Prostate gland (tissue), 2 donors: ENCODE measurements at regions of chr1 and their contacts with region 1.

Region 1: DNA sequence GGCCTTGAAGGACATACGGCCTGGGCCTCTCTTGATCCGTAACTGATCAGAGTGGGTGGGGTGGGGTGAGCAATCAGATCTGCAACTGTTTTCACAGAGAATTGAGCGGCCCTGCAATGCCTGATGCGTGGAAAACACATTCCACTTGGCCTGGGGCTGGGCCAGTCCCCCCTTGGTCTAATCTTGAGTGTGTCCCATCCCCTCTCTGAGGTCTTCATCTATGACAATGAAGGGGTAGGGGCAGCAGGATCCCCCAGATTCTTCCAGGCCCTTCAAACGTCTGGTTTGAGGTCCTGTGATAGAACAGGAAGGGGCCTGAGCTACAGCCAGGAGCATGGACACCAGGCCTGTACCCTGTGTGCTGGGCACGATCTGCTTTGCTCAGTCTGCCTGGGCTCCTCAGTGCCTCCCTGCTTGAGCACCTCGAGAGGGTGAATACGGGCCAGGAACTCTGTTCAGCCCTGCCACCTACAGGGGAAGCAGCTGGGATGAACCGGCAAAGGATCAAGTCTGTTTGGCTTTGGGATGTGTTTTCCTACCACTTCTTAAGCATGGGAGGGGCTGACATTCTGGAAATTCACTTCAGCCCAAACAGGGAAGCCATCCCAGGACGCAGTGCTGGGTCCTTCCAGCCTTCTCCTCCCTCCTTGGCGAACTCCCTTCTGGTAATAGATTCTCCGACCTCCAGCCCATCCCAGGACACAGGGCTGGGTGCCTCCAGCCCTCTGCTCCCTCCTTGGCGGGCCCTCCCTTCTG is 56.0 kb upstream of the SELENON start:
- DNase-seq: peak; percentile 73
- H3K4me3 ChIP-seq: no peak overlapping the region
- H3K27ac ChIP-seq: peak overlapping the region; percentile 71 to 82
- H3K4me1 ChIP-seq: peaks cover 20% of the 10 kb centered on the region
- H3K27me3 ChIP-seq: no peaks in the 10 kb centered on the region
- CTCF ChIP-seq: peak in 3 of 4 experiments; percentile 56 to 71 (median 69)
- POLR2A ChIP-seq: no peak

Region 2: GRCh38 chr1:25616095-25616986 is 127.7 kb before region 1 on chr1 and contains the start of gene MAN1C1:
- intact Hi-C with region 1: loop called (anchors 2 kb)
- DNase-seq: peak; percentile 78
- H3K4me3 ChIP-seq: peak within 1 kb of the TSS; percentile 80 to 93
- H3K27ac ChIP-seq: peak within 1 kb of the TSS; percentile 79 to 87
- H3K4me1 ChIP-seq: peaks cover 3% of the 10 kb centered on the region
- H3K27me3 ChIP-seq: no peaks in the 10 kb centered on the region
- CTCF ChIP-seq: peak in 3 of 4 experiments; percentile 31 to 69 (median 57)
- POLR2A ChIP-seq: peak; percentile 53
- total RNA-seq, gene MAN1C1: 22.8 to 34.4 TPM

Region 3: DNA sequence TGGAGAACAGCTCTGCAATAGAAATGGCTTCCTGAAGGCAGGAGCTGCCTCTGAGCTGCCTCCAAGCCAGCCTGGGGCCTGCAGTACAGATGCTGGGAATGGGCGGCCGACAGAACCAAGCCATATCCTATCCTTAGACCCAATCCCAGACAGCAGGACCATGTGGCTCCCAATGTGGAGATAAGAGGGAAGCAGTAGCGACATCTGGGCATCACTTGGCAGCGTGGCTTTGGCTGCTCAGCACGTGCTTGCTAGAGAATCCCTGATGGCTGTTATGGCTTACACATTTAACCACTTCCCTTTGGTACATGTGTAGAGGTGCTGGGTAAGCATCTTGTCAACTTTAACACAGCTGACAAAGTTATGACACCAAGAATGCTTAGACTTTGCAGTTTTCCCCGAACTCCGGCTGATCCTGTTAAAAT is 39.7 kb before region 1 on chr1:
- intact Hi-C with region 1: no loop called
- DNase-seq: no peak
- H3K4me3 ChIP-seq: no peak overlapping the region
- H3K27ac ChIP-seq: no peak overlapping the region
- H3K4me1 ChIP-seq: peaks cover 3% of the 10 kb centered on the region
- H3K27me3 ChIP-seq: no peaks in the 10 kb centered on the region
- CTCF ChIP-seq: no peak
- POLR2A ChIP-seq: no peak

Region 4: DNA sequence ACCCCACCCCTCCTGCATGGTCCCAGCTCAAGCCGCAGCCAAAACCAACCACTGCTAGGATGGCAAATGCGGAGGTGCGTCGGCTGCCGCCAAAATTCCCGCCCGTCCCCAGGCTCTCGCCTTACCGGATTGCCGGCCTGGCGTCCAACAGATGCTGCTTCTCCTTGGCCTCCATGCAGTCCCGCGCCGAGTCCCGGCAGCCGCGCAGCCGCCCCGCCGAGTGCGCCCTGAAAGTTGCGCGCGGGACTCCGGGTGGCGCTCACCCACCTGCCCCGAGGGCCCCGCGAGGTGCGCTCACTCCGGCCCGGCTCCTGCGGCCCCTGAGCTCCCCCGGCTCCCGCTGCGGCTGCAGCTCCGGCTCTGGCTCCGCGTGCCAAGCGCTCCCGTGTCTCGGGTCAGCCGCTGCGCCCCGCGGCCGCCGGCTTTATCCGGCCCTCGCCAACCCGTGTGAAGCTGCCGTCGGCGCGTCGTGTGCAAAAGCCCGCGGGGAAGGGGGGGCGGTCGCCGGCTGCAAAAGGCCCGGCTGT is 301.8 kb after region 1 on chr1 and contains the start of gene SLC30A2:
- intact Hi-C with region 1: no loop called
- DNase-seq: no peak
- H3K4me3 ChIP-seq: peak within 1 kb of the TSS in 1 of 2 donors; percentile 4
- H3K27ac ChIP-seq: no peak within 1 kb of the TSS
- H3K4me1 ChIP-seq: peaks cover 6% of the 10 kb centered on the region
- H3K27me3 ChIP-seq: peaks cover 27% of the 10 kb centered on the region
- CTCF ChIP-seq: no peak
- POLR2A ChIP-seq: no peak
- total RNA-seq, gene SLC30A2: 0.05 to 0.34 TPM